Activated CD8-positive, alpha-beta T cell treated with anti-CD3 and anti-CD28 coated beads, Interleukin-2, amount 10 ng/mL, durations not matched to agents 7 days and 5 days (primary cell): ENCODE measurements at regions of chr1 and their contacts with region 1.

Region 1: GRCh38 chr1:151934048-151934493 is 24.8 kb upstream of the THEM4 start:
- DNase-seq: peak; percentile 63
- ATAC-seq: peak; percentile 88
- H3K4me3 Mint-ChIP-seq: no peak overlapping the region
- H3K27ac Mint-ChIP-seq: no peak overlapping the region
- H3K4me1 Mint-ChIP-seq: peaks cover 2% of the 10 kb centered on the region
- H3K27me3 Mint-ChIP-seq: peaks cover 17% of the 10 kb centered on the region

Region 2: GRCh38 chr1:151661751-151662150 is 272.3 kb before region 1 on chr1:
- CTCF ChIA-PET with region 1: no interaction called
- POLR2A ChIA-PET with region 1: no interaction called
- DNase-seq: no peak
- ATAC-seq: no peak
- H3K4me3 Mint-ChIP-seq: no peak overlapping the region
- H3K27ac Mint-ChIP-seq: peak overlapping the region; percentile 79
- H3K4me1 Mint-ChIP-seq: peaks cover 7% of the 10 kb centered on the region
- H3K27me3 Mint-ChIP-seq: no peaks in the 10 kb centered on the region

Region 3: DNA sequence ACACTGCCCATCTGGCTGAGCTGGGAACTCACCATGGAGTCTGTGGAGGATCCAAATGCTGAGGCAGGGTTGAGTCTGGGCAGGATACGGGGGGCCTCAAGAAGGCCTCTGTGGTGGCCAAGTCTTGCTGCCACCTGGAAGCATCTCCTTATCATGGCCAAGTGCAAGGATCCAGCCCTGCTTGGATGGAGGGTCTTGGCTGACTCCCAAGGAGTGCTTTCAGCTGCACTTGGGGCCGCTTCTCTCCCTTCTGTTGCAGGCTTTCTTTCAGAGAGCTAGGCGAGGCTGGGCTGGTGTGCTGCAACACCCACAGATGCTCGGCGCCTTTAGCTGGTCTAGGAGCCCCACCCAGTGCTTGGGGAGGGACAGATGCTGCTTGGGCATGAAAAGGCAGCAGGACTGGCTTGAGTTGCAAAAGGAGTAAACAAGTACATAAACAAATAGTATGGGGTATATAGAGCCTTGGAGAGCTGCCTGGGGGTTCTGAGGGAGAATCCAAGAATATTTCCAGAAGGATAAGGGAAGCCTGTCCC is 80.6 kb before region 1 on chr1 and contains the start of gene THEM5:
- CTCF ChIA-PET with region 1: no interaction called
- POLR2A ChIA-PET with region 1: no interaction called
- DNase-seq: no peak
- ATAC-seq: peak; percentile 51
- H3K4me3 Mint-ChIP-seq: no peak within 1 kb of the TSS
- H3K27ac Mint-ChIP-seq: no peak within 1 kb of the TSS
- H3K4me1 Mint-ChIP-seq: no peaks in the 10 kb centered on the region
- H3K27me3 Mint-ChIP-seq: no peaks in the 10 kb centered on the region
- total RNA-seq, gene THEM5: not detected

Region 4: DNA sequence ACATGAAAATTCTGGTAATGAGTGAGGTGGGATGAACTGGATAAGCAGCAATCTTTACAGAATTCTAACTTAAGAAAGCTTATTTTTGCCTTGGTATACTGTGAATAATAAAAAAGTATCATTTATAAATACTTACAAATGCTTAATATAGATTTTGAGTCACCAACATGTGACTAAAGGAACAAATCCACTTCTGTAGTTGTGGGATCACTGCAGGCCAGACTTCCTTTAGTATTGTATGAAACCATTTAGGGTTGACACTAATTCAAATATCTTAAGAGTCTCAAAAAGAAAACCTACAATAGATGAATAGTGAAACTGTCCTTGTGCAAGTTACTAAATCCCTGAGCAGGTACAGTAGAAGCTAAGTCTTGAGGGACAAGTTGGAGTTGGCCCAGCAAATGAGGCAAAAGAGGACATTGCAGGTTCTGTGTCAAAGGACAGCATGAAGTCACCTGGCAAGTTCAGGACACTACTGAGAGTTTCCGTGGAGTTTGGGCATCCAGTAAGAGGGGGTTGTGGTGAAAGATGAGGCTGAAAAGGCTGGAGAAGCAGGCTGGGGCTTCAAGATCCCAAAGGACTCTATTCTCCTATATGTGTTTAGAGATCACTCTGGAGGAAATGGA is 18.9 kb before region 1 on chr1:
- CTCF ChIA-PET with region 1: interaction called, 31 read pairs
- POLR2A ChIA-PET with region 1: no interaction called
- DNase-seq: no peak
- ATAC-seq: no peak
- H3K4me3 Mint-ChIP-seq: no peak overlapping the region
- H3K27ac Mint-ChIP-seq: no peak overlapping the region
- H3K4me1 Mint-ChIP-seq: peaks cover 3% of the 10 kb centered on the region
- H3K27me3 Mint-ChIP-seq: peaks cover 9% of the 10 kb centered on the region

Region 5: DNA sequence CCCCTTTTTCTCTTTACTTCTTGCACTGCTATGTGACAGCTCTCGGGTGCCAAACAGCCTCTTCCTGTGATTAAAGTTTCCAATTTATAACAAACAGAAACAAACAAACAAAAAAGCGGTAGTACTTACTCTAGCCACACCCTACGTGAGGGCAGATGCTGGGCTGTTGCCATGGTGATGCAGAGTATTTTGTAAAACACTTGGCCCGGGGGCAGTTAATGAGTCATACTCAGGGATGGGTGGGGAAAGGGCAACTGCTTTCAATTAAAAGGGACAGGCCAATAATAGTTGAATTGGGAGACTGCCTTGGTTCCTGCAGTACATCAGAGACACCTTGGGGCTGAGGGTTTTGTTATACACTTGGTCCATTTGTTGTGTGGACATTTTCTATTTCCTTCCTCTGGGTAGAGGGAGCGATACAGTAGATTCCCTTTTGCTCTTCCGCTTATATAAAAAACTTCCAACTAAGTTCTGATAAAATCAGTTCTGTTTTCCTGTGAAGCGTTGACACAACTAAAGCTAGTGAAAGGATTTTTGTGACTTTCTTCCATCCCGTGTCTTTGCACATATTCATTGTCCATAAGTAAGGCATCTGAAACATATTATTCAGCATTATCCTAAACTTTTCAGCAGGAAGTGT is 11.8 kb after region 1 on chr1:
- CTCF ChIA-PET with region 1: interaction called, 27 read pairs
- POLR2A ChIA-PET with region 1: no interaction called
- DNase-seq: peak; percentile 82
- ATAC-seq: peak; percentile 81
- H3K4me3 Mint-ChIP-seq: peak overlapping the region; percentile 40
- H3K27ac Mint-ChIP-seq: peak overlapping the region; percentile 73
- H3K4me1 Mint-ChIP-seq: peaks cover 29% of the 10 kb centered on the region
- H3K27me3 Mint-ChIP-seq: peaks cover 6% of the 10 kb centered on the region

Region 6: GRCh38 chr1:151992345-151993086 is 58.4 kb after region 1 on chr1:
- CTCF ChIA-PET with region 1: interaction called, 256 read pairs
- POLR2A ChIA-PET with region 1: no interaction called
- DNase-seq: peak; percentile 51
- ATAC-seq: peak; percentile 4
- H3K4me3 Mint-ChIP-seq: peak overlapping the region; percentile 99
- H3K27ac Mint-ChIP-seq: peak overlapping the region; percentile 97
- H3K4me1 Mint-ChIP-seq: peaks cover 62% of the 10 kb centered on the region
- H3K27me3 Mint-ChIP-seq: no peaks in the 10 kb centered on the region

Region 7: GRCh38 chr1:152034646-152035405 is 100.8 kb after region 1 on chr1:
- CTCF ChIA-PET with region 1: interaction called, 13 read pairs
- POLR2A ChIA-PET with region 1: interaction called, 3 read pairs
- DNase-seq: peak; percentile 83
- ATAC-seq: peak; percentile 81
- H3K4me3 Mint-ChIP-seq: peak overlapping the region; percentile 98
- H3K27ac Mint-ChIP-seq: peak overlapping the region; percentile 98
- H3K4me1 Mint-ChIP-seq: peaks cover 43% of the 10 kb centered on the region
- H3K27me3 Mint-ChIP-seq: no peaks in the 10 kb centered on the region